ENCODE measurements at regions of chr2 and their contacts with region 1.

Region 1: GRCh38 chr2:160918906-160919503 is 241.2 kb upstream of the TANK start:
- DNase-seq: peak; percentile 54
- H3K4me3 ChIP-seq: no peak overlapping the region
- H3K27ac ChIP-seq: no peak overlapping the region
- H3K4me1 ChIP-seq: peaks cover 2% of the 10 kb centered on the region
- H3K27me3 ChIP-seq: no peaks in the 10 kb centered on the region
- CTCF ChIP-seq: peak; percentile 54 to 79

Region 2: DNA sequence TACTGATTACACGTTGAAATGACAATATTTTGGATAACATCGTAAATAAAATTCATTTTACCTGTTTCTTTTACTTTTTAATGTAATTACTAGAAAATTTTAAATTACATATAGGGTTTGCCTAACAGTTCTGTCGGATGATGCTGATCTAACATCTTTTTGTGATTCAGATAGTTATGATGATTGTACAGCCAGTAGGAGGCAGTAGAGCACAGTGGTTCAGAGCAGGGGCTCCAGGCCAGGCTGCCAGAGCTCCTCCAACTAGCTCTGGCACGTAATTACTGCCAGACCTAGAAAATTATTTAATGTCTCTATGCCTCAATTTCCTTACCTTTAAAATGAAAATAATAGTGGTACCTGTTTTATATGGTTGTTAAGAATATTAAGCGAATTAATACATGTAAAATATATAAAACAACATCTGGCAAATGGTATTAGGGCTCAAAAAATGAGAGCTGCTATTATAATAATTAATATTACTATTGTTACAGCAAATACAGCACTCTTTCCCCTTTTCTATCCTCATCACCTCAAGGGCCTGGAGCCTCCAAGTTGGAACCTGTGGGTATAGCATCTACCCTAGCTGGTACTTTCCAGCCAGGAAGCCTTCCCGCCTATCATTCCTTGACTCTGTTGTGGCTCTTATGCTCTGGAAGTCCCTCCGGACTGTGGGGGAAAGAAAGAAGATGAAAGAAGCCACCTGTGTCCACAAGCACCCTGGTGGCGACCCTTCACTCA is 808.9 kb before region 1 on chr2:
- CTCF ChIA-PET with region 1: interaction called, 8 read pairs
- dilution Hi-C with region 1: no loop called
- in situ Hi-C with region 1: no loop called
- intact Hi-C with region 1: loop called (anchors 10 kb)
- DNase-seq: peak; percentile 33
- H3K4me3 ChIP-seq: no peak overlapping the region
- H3K27ac ChIP-seq: peak overlapping the region; percentile 31
- H3K4me1 ChIP-seq: peaks cover 21% of the 10 kb centered on the region
- H3K27me3 ChIP-seq: no peaks in the 10 kb centered on the region
- CTCF ChIP-seq: peak; percentile 81 to 84

Region 3: GRCh38 chr2:160324161-160324800 is 594.7 kb before region 1 on chr2:
- CTCF ChIA-PET with region 1: interaction called, 6 read pairs
- dilution Hi-C with region 1: no loop called
- in situ Hi-C with region 1: no loop called
- intact Hi-C with region 1: loop called (anchors 2 kb)
- DNase-seq: peak; percentile 32
- H3K4me3 ChIP-seq: no peak overlapping the region
- H3K27ac ChIP-seq: no peak overlapping the region
- H3K4me1 ChIP-seq: no peaks in the 10 kb centered on the region
- H3K27me3 ChIP-seq: no peaks in the 10 kb centered on the region
- CTCF ChIP-seq: peak; percentile 80 to 84

Region 4: GRCh38 chr2:160406591-160407392 is 512.2 kb before region 1 on chr2:
- CTCF ChIA-PET with region 1: no interaction called
- dilution Hi-C with region 1: no loop called
- in situ Hi-C with region 1: no loop called
- intact Hi-C with region 1: loop called (anchors 2 kb)
- DNase-seq: peak; percentile 80
- H3K4me3 ChIP-seq: peak overlapping the region; percentile 76 to 85 (median 84)
- H3K27ac ChIP-seq: peak overlapping the region; percentile 87
- H3K4me1 ChIP-seq: peaks cover 64% of the 10 kb centered on the region
- H3K27me3 ChIP-seq: no peaks in the 10 kb centered on the region
- CTCF ChIP-seq: no peak

Region 5: DNA sequence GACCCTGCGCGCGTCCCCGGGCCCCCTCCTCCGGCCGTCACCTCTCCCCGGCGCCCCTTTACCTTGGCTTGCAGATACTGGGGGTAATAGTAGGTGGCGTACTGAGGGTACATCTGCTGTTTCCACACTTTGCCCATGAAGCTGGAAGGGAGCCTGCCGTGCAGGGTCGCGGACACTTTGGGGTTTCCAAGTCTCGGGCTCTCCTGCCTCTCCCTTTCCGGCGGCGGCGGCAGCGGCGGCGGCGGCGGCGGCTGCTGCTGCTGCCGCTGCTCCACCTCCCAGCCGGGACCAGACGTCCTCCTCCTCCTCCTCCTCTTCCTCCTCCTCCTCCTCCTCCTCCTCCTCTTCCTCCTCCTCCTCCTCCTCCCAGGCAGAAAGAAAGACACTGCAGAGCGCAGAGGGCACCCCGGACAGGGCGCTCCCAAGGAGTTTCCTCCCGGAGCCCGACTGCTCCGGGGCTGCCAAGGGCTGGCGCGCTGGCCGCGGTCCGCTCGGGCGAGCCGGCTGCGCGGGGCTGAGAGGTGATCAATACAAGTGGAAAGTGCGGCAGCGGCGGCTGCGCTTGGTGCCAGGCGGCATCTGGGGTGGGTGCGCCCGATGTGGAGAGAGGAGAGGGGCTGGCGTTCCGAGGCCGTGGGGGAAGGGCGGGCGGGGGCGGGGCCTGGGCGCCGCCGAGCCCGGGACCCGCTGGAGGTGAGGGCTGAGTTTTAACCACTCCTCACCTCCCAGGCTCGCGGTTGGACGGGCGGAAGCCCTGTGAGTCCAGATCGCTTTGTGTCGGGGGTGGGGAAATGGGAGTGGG is 425.6 kb before region 1 on chr2 and contains the start of gene RBMS1:
- CTCF ChIA-PET with region 1: no interaction called
- dilution Hi-C with region 1: no loop called
- in situ Hi-C with region 1: no loop called
- intact Hi-C with region 1: loop called (anchors 2 kb)
- DNase-seq: peak; percentile 59
- H3K4me3 ChIP-seq: peak within 1 kb of the TSS; percentile 72 to 95 (median 72)
- H3K27ac ChIP-seq: peak within 1 kb of the TSS; percentile 84
- H3K4me1 ChIP-seq: peaks cover 11% of the 10 kb centered on the region
- H3K27me3 ChIP-seq: no peaks in the 10 kb centered on the region
- CTCF ChIP-seq: no peak
- total RNA-seq, gene RBMS1: 54.8 to 61.3 TPM

Measured in mammary epithelial cell (primary cell).